K562 (cell line): ENCODE measurements at regions of chr1 and their contacts with region 1.

Region 1: GRCh38 chr1:45654540-45655280 is 30.9 kb upstream of the CCDC17 start:
- DNase-seq: no peak
- ATAC-seq: no peak
- H3K4me3 ChIP-seq: no peak overlapping the region
- H3K27ac ChIP-seq: no peak overlapping the region
- H3K4me1 ChIP-seq: no peaks in the 10 kb centered on the region
- H3K27me3 ChIP-seq: no peaks in the 10 kb centered on the region
- CTCF ChIP-seq: no peak
- EP300 ChIP-seq: no peak
- POLR2A ChIP-seq: no peak
- RAD21 ChIP-seq: no peak

Region 2: DNA sequence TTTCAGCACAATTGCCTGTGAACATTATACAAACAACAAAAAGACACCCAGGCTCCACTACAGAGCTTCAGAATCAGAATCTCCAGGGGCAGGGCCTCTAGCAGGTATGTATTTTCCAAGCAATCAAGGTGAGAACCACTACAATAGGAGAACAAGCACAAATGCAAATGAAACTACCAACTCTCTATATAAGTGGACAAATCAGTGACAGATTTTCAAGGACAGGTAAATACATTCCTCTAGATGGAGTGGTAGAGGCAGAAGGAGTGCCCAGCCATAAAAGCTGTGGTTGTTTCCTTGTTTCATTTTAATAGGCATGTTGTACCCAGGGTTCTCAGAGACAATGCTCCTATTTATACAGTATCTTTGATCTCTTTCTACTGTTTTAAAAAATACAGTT is 10.7 kb before region 1 on chr1:
- CTCF ChIA-PET with region 1: no interaction called
- POLR2A ChIA-PET with region 1: interaction called, 35 read pairs
- in situ Hi-C with region 1: no loop called
- intact Hi-C with region 1: no loop called
- DNase-seq: no peak
- ATAC-seq: peak; percentile 43; the same call in 2 of the 3 replicates
- H3K4me3 ChIP-seq: no peak overlapping the region
- H3K27ac ChIP-seq: no peak overlapping the region
- H3K4me1 ChIP-seq: no peaks in the 10 kb centered on the region
- H3K27me3 ChIP-seq: no peaks in the 10 kb centered on the region
- CTCF ChIP-seq: peak in 1 of 3 experiments; percentile 16; a peak in 3 of 6 replicates
- EP300 ChIP-seq: no peak
- POLR2A ChIP-seq: no peak
- RAD21 ChIP-seq: peak in 1 of 2 experiments; percentile 34; a peak in 1 of 4 replicates